MCF 10A (cell line): ENCODE measurements at regions of chr13 and their contacts with region 1.

Region 1: DNA sequence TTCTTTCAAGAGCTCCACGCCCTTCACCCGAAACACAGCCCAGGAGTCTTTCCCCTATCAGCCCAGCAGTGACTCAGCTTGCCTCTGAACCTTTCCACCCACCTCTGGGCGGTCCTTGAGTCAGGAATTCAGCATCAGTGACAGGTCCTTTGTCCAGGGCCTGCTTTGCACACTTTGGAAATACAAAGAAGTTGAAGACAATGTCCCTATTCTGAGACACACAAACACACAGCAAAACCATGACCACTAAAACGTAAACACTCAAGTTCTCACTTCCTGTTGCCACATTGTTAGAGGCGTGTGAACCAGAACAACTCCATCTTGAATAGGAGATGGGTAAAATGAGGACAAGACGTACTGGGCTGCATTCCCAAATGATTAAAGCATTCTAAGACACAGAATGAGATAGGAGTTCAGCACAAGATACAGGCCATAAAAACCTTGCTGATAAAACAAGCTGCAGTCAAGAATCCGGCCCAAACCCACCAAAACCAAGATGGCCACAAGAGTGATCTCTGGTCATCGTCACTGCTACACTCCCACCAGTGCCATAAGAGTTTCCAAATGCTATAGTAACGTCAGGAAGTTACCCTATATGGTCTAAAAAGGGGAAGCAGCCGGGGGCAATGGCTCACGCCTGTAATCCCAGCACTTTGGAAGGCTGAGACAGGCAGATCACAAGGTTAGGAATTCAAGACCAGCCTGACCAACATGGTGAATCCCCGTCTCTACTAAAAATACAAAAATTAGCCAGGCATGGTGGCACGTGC is 49.2 kb upstream of the ATP12A start:
- DNase-seq: peak; percentile 59
- H3K4me3 Mint-ChIP-seq: no peak overlapping the region
- H3K27ac Mint-ChIP-seq: peak overlapping the region; percentile 66
- H3K4me1 Mint-ChIP-seq: peaks cover 11% of the 10 kb centered on the region
- H3K27me3 Mint-ChIP-seq: no peaks in the 10 kb centered on the region
- CTCF ChIP-seq: no peak

Region 2: GRCh38 chr13:24664726-24665409 is 33.8 kb after region 1 on chr13:
- CTCF ChIA-PET with region 1: no interaction called
- POLR2A ChIA-PET with region 1: interaction called, 3 read pairs
- intact Hi-C with region 1: loop called (anchors 5 kb)
- DNase-seq: peak; percentile 47
- H3K4me3 Mint-ChIP-seq: no peak overlapping the region
- H3K27ac Mint-ChIP-seq: peak overlapping the region; percentile 63
- H3K4me1 Mint-ChIP-seq: peaks cover 21% of the 10 kb centered on the region
- H3K27me3 Mint-ChIP-seq: no peaks in the 10 kb centered on the region
- CTCF ChIP-seq: no peak

Region 3: DNA sequence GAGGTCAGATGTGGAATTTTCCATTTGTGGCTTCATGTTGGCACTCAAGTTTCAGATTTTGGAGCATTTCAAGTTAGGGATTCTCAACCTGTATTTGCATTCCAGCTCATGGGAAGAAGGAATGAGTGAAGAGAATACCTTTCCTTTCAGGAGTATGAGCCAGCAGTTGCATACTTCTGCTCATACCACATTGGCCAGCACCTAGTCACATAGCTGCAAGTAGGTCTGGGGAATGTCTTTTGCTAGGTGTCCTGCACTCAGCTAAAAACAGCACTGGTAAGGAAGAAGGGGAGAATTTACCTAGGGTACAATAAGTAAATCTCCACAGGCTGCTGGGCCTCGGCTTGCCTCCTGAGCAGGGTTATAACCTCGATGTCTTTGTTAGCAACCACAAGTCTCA is 716.1 kb after region 1 on chr13:
- CTCF ChIA-PET with region 1: no interaction called
- POLR2A ChIA-PET with region 1: no interaction called
- intact Hi-C with region 1: no loop called
- DNase-seq: no peak
- H3K4me3 Mint-ChIP-seq: no peak overlapping the region
- H3K27ac Mint-ChIP-seq: no peak overlapping the region
- H3K4me1 Mint-ChIP-seq: no peaks in the 10 kb centered on the region
- H3K27me3 Mint-ChIP-seq: peaks cover 5% of the 10 kb centered on the region
- CTCF ChIP-seq: no peak